Mammary epithelial cell (primary cell): ENCODE measurements at regions of chr4 and their contacts with region 1.

Region 1: DNA sequence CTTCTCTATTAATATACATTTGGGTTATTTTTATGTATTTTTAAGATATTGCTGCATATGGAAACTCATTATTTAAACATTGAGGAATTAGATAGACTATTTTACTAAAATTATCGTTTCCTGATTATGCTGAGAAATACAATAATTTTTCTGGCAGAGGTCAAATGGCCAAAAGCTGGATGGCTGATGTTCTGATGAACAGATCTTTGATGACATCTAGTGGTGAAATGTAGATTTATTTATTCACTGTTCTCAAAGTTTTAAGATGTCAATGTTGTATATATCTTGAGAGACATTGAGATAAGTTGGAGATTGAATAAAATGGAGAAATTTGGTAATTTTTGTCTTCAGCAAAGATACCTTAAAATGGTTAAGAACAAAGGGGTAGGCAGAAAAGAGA is 96.2 kb downstream of the UGT8 start:
- DNase-seq: peak; percentile 16
- H3K4me3 ChIP-seq: no peak overlapping the region
- H3K27ac ChIP-seq: no peak overlapping the region
- H3K4me1 ChIP-seq: no peaks in the 10 kb centered on the region
- H3K27me3 ChIP-seq: no peaks in the 10 kb centered on the region
- CTCF ChIP-seq: peak; percentile 43 to 56

Region 2: GRCh38 chr4:114132830-114133229 is 561.9 kb before region 1 on chr4:
- CTCF ChIA-PET with region 1: interaction called, 18 read pairs
- dilution Hi-C with region 1: no loop called
- in situ Hi-C with region 1: no loop called
- intact Hi-C with region 1: no loop called
- DNase-seq: peak; percentile 3
- H3K4me3 ChIP-seq: no peak overlapping the region
- H3K27ac ChIP-seq: no peak overlapping the region
- H3K4me1 ChIP-seq: no peaks in the 10 kb centered on the region
- H3K27me3 ChIP-seq: no peaks in the 10 kb centered on the region
- CTCF ChIP-seq: peak; percentile 34 to 47

Region 3: DNA sequence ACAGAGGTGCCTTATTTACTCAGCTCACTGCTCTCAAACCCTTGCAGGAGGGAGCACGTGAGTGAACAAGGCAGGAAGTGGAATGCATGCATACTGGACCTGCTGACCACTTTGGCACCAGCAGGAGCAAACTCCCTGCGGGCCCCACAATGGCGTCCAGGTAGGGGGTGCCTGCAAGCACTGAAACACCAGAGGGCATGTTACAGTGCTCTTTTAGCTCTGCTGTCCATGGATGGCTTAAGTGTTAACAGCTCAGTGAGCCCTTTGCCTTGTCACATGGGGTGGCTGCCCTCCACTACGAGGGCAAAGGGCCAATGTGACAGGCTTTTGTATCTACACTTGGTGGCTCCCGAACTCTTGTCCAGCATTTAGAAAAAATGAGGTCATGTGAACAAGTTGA is 295.7 kb before region 1 on chr4:
- CTCF ChIA-PET with region 1: no interaction called
- dilution Hi-C with region 1: no loop called
- in situ Hi-C with region 1: loop called (anchors 10 kb)
- intact Hi-C with region 1: no loop called
- DNase-seq: no peak
- H3K4me3 ChIP-seq: no peak overlapping the region
- H3K27ac ChIP-seq: no peak overlapping the region
- H3K4me1 ChIP-seq: peaks cover 2% of the 10 kb centered on the region
- H3K27me3 ChIP-seq: no peaks in the 10 kb centered on the region
- CTCF ChIP-seq: no peak